Endothelial cell of umbilical vein (primary cell): ENCODE measurements at regions of chr19 and their contacts with region 1.

Region 1: DNA sequence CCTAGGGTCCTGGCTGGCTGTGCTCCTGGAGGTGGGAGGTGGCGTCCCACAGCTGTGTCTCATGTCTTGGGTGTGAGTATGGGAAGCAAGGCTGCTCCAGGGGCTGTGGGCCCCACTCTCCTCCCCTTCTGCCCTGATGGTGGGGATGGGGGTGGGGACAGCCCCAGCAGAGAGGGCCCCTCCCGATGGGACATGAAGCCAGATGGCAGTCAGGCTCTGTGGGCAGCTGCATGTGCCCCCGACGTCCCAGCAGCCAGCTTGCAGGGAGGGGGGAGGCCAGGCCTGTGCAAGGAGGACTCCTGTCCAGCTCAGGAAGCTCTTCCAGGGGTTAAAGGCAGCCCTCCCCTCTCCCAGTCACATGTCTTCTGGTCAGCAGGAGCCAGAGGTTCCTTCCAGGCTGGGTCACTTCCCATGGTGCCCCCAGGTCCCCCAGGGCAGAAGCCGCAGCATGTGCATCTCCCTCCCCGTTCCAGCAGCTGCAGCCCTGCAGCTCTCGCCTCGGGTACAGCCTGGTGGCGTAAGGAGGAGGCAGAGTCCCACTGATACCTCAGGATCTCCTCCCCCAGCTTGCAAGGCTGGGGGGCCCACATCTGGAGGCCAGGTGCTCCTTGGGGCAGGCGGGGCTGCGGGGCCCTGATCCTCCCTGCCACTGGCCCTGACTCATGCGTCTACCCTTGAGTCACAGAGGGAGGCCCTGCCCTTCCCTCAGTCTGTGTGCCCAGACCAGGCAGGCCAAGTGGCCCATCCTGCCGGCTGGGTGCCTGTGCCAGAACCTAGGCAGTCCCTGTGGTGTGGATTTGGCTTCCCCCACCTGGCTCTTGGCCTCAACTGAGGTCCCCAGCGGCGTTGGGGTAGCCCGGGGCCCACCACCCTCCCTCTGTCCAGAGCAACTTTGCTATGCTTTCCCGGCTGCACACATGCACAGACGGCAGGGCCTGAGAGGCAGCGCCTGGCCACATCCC is 13.0 kb downstream of the YIPF2 start:
- DNase-seq: no peak
- H3K4me3 ChIP-seq: no peak overlapping the region
- H3K27ac ChIP-seq: no peak overlapping the region
- H3K4me1 ChIP-seq: no peaks in the 10 kb centered on the region
- H3K27me3 ChIP-seq: no peaks in the 10 kb centered on the region
- CTCF ChIP-seq: no peak
- POLR2A ChIP-seq: no peak

Region 2: GRCh38 chr19:10928525-10929401 is 13.4 kb after region 1 on chr19 and contains the starts of genes TIMM29 and YIPF2:
- CTCF ChIA-PET with region 1: no interaction called
- POLR2A ChIA-PET with region 1: no interaction called
- dilution Hi-C with region 1: no loop called
- intact Hi-C with region 1: no loop called
- DNase-seq: peak; percentile 96
- H3K4me3 ChIP-seq: peak within 1 kb of the TSS; percentile 69 to 96 (median 73)
- H3K27ac ChIP-seq: no peak within 1 kb of the TSS
- H3K4me1 ChIP-seq: peaks cover 9% of the 10 kb centered on the region
- H3K27me3 ChIP-seq: no peaks in the 10 kb centered on the region
- CTCF ChIP-seq: no peak
- POLR2A ChIP-seq: peak; percentile 77
- total RNA-seq, gene TIMM29: 16.4 and 20.6 TPM in 2 replicates
- total RNA-seq, gene YIPF2: 45.3 and 47.8 TPM in 2 replicates

Region 3: GRCh38 chr19:10984166-10984735 is 68.8 kb after region 1 on chr19:
- CTCF ChIA-PET with region 1: no interaction called
- POLR2A ChIA-PET with region 1: no interaction called
- dilution Hi-C with region 1: no loop called
- intact Hi-C with region 1: no loop called
- DNase-seq: no peak
- H3K4me3 ChIP-seq: no peak overlapping the region
- H3K27ac ChIP-seq: no peak overlapping the region
- H3K4me1 ChIP-seq: no peaks in the 10 kb centered on the region
- H3K27me3 ChIP-seq: no peaks in the 10 kb centered on the region
- CTCF ChIP-seq: no peak
- POLR2A ChIP-seq: no peak

Region 4: DNA sequence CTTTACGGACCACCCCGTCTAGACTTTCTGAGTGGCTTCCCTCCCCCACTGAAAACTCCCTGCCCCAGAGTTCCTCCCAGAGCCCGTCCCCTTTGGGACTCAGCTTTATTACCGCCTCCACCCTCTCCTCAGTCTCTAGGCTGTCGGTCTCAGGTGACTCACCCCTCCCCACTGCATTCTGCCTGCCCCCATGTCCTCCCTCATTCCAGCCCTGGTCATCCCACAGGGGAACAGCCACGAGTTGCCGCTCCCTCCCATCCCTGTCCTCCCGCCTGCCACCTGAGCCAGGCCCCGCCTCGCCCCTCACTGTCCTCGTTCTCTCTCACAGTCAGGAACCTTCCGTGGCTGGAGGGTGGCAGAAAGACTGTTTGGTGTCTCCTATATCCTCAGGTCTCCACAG is 102.8 kb after region 1 on chr19:
- CTCF ChIA-PET with region 1: no interaction called
- POLR2A ChIA-PET with region 1: no interaction called
- dilution Hi-C with region 1: loop called (anchors 10 kb)
- intact Hi-C with region 1: no loop called
- DNase-seq: no peak
- H3K4me3 ChIP-seq: no peak overlapping the region
- H3K27ac ChIP-seq: no peak overlapping the region
- H3K4me1 ChIP-seq: no peaks in the 10 kb centered on the region
- H3K27me3 ChIP-seq: no peaks in the 10 kb centered on the region
- CTCF ChIP-seq: no peak
- POLR2A ChIP-seq: no peak